IMR-90 (cell line): ENCODE measurements at regions of chr16 and their contacts with region 1.

Region 1: GRCh38 chr16:84277237-84277823 is 17.3 kb upstream of the WFDC1 start:
- DNase-seq: peak; percentile 33
- ATAC-seq: peak; percentile 94
- H3K4me3 ChIP-seq: no peak overlapping the region
- H3K27ac ChIP-seq: no peak overlapping the region
- H3K4me1 ChIP-seq: no peaks in the 10 kb centered on the region
- H3K27me3 ChIP-seq: peaks cover 14% of the 10 kb centered on the region
- CTCF ChIP-seq: peak; percentile 82
- POLR2A ChIP-seq: no peak
- RAD21 ChIP-seq: peak; percentile 83

Region 2: DNA sequence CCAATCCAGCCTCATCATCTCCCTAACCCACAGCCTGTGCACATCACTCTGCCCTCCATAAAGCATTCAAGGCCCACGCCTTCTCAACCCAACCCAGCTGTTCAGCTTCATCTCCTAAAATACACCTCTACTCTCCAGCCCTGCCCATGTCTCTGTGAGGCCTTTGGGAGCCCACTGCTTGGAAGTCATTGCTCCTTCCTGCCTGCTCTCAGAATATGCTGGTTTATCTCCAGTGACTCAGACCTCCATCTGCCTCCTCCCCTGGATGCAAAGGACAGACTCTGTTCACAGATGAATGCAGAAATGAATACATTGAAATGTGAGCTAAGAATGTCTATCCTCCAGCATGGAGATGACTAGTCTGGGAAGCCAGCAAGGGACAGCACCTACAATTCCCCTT is 56.5 kb before region 1 on chr16:
- CTCF ChIA-PET with region 1: no interaction called
- POLR2A ChIA-PET with region 1: no interaction called
- dilution Hi-C with region 1: no loop called
- in situ Hi-C with region 1: no loop called
- intact Hi-C with region 1: no loop called
- DNase-seq: peak; percentile 72
- ATAC-seq: peak; percentile 91
- H3K4me3 ChIP-seq: no peak overlapping the region
- H3K27ac ChIP-seq: no peak overlapping the region
- H3K4me1 ChIP-seq: peaks cover 1% of the 10 kb centered on the region; the same call in 1 of the 2 replicates
- H3K27me3 ChIP-seq: peaks cover 27% of the 10 kb centered on the region
- CTCF ChIP-seq: no peak
- POLR2A ChIP-seq: no peak
- RAD21 ChIP-seq: no peak

Region 3: GRCh38 chr16:84303023-84303422 is 25.7 kb after region 1 on chr16:
- CTCF ChIA-PET with region 1: interaction called, 15 read pairs
- POLR2A ChIA-PET with region 1: interaction called, 4 read pairs
- dilution Hi-C with region 1: no loop called
- in situ Hi-C with region 1: no loop called
- intact Hi-C with region 1: loop called (anchors 1 kb)
- DNase-seq: peak; percentile 73
- ATAC-seq: peak; percentile 83
- H3K4me3 ChIP-seq: no peak overlapping the region
- H3K27ac ChIP-seq: peak overlapping the region; percentile 93
- H3K4me1 ChIP-seq: peaks cover 41% of the 10 kb centered on the region
- H3K27me3 ChIP-seq: no peaks in the 10 kb centered on the region
- CTCF ChIP-seq: no peak
- POLR2A ChIP-seq: no peak
- RAD21 ChIP-seq: no peak

Region 4: GRCh38 chr16:84308120-84308519 is 30.8 kb after region 1 on chr16:
- CTCF ChIA-PET with region 1: interaction called, 15 read pairs
- POLR2A ChIA-PET with region 1: no interaction called
- dilution Hi-C with region 1: no loop called
- in situ Hi-C with region 1: no loop called
- intact Hi-C with region 1: loop called (anchors 1 kb)
- DNase-seq: peak; percentile 34
- ATAC-seq: peak; percentile 75
- H3K4me3 ChIP-seq: no peak overlapping the region
- H3K27ac ChIP-seq: no peak overlapping the region
- H3K4me1 ChIP-seq: peaks cover 13% of the 10 kb centered on the region
- H3K27me3 ChIP-seq: no peaks in the 10 kb centered on the region
- CTCF ChIP-seq: peak; percentile 69
- POLR2A ChIP-seq: no peak
- RAD21 ChIP-seq: peak; percentile 79

Region 5: GRCh38 chr16:84484579-84485254 is 207.4 kb after region 1 on chr16:
- CTCF ChIA-PET with region 1: interaction called, 5 read pairs
- POLR2A ChIA-PET with region 1: no interaction called
- dilution Hi-C with region 1: no loop called
- in situ Hi-C with region 1: no loop called
- intact Hi-C with region 1: loop called (anchors 1 kb)
- DNase-seq: peak; percentile 74
- ATAC-seq: peak; percentile 94
- H3K4me3 ChIP-seq: no peak overlapping the region
- H3K27ac ChIP-seq: no peak overlapping the region
- H3K4me1 ChIP-seq: no peaks in the 10 kb centered on the region; the same call in 1 of the 2 replicates
- H3K27me3 ChIP-seq: no peaks in the 10 kb centered on the region
- CTCF ChIP-seq: peak; percentile 84
- POLR2A ChIP-seq: no peak
- RAD21 ChIP-seq: peak; percentile 95

Region 6: DNA sequence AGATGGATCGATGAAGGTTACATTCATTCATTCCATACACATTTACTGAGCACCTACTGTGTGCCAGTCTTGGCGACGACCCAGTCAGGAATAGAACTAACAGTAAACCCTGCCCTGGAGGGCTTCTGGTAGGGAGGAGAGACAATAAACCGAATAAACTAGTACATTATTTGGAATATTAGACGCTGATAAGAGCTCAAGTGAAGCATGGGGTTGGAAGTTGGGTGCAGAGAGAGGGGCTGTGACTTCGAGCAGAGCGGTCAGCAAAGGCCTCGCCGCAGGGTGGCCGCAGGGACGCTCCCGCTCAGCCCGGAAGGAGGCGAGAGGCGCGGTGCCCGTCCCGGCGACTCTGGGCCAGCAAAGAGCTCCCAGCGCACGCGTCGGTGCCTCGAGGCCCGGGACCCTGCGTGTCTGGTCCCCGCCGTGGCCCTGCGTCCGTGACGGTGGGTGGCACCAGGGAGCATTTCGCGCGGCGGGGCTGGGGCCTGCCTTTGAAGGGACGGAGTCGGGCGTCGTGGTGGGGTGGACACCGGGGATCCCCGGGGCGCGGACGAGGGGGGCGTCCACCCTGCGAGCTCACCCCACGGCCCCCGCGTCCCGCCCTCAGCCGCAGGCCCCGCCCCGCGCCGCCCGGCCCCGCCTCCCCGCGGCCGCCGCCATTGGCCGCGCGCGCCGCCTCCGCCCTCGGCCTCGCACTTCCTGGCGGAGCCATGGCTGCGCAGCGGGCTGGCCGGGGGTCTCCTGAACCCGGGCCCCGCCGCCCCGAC is 370.7 kb after region 1 on chr16 and contains the start of gene KLHL36:
- CTCF ChIA-PET with region 1: no interaction called
- POLR2A ChIA-PET with region 1: no interaction called
- dilution Hi-C with region 1: no loop called
- in situ Hi-C with region 1: loop called (anchors 25 kb)
- intact Hi-C with region 1: no loop called
- DNase-seq: no peak
- ATAC-seq: peak; percentile 93
- H3K4me3 ChIP-seq: peak within 1 kb of the TSS; percentile 64
- H3K27ac ChIP-seq: peak within 1 kb of the TSS; percentile 93
- H3K4me1 ChIP-seq: peaks cover 24% of the 10 kb centered on the region
- H3K27me3 ChIP-seq: no peaks in the 10 kb centered on the region
- CTCF ChIP-seq: no peak
- POLR2A ChIP-seq: peak; percentile 30; the same call in 1 of the 2 replicates
- RAD21 ChIP-seq: no peak
- total RNA-seq, gene KLHL36: 45.9 and 50.3 TPM in 2 replicates

Region 7: GRCh38 chr16:84699712-84700445 is 422.5 kb after region 1 on chr16 and contains the start of gene USP10:
- CTCF ChIA-PET with region 1: no interaction called
- POLR2A ChIA-PET with region 1: no interaction called
- dilution Hi-C with region 1: no loop called
- in situ Hi-C with region 1: loop called (anchors 25 kb)
- intact Hi-C with region 1: no loop called
- DNase-seq: peak; percentile 68
- ATAC-seq: peak; percentile 93
- H3K4me3 ChIP-seq: peak within 1 kb of the TSS; percentile 92
- H3K27ac ChIP-seq: peak within 1 kb of the TSS; percentile 63
- H3K4me1 ChIP-seq: peaks cover 6% of the 10 kb centered on the region
- H3K27me3 ChIP-seq: no peaks in the 10 kb centered on the region
- CTCF ChIP-seq: no peak
- POLR2A ChIP-seq: peak; percentile 77
- RAD21 ChIP-seq: no peak
- total RNA-seq, gene USP10: 54.3 and 61.9 TPM in 2 replicates

Region 8: DNA sequence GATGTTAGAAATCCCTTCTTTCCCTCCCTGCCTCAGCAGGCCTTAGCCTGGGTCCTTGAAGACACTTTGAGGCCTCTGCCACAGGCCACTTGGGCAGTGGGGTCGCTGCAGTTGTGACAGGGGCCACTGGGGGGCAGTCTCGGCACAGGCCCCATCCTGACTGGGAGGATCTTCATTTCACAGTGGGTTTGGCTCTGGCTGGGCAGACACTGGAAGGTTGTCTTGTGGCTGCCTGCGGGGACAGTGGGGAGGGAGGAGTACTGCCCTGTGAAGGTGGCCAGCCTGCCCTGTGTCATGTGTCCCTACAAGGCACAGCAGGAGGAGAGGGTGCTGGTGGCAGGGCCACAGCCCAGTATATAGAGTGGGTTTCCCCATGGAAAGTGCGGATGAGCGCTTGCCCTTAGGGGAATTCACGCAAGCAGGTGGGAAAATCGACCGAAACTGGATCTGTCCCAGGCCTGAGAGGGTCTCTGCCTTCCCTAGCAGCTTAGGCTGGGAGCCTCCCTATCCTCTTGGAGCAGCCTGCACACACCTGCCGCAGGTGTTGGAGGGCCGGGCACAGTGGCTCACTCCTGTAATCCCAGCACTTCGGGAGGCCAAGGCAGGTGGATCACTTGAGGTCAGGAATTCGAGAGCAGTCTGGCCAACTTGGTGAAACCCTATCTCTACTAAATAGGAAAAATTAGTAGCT is 1382.6 kb after region 1 on chr16:
- CTCF ChIA-PET with region 1: no interaction called
- POLR2A ChIA-PET with region 1: no interaction called
- dilution Hi-C with region 1: no loop called
- in situ Hi-C with region 1: no loop called
- intact Hi-C with region 1: no loop called
- DNase-seq: peak; percentile 41
- ATAC-seq: peak; percentile 97
- H3K4me3 ChIP-seq: no peak overlapping the region
- H3K27ac ChIP-seq: no peak overlapping the region
- H3K4me1 ChIP-seq: no peaks in the 10 kb centered on the region; the same call in 1 of the 2 replicates
- H3K27me3 ChIP-seq: no peaks in the 10 kb centered on the region
- CTCF ChIP-seq: peak; percentile 78
- POLR2A ChIP-seq: no peak
- RAD21 ChIP-seq: peak; percentile 70